ENCODE measurements at regions of chr3 and their contacts with region 1.

Region 1: DNA sequence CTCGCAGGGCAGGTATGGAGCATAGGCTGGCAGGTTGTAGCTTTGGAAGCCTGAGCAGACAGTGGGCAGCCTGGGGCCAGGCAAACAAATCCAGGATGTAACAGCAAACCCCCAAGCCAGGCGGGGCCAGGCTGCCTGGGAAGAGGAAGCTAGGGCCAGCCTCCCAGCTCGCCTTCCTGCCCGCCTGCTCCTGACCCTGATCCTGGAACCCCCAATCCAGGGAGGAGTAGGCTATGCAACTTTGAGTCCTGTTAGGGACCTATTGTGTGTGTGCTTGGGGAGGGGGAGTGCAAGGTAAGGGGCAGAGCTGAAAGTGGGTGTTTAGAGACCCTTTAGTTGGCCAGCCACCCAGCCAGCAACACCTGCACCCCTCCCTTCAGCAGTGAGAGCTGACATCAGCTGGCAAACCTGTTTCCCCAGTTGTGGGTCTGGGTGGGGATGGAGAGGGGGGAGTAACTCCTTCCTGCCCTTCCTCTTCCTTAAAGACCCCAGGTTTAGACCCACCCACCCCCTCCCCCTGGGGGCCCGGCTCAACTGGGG is 2.5 kb downstream of the NBEAL2 start:
- DNase-seq: peak; percentile 76
- ATAC-seq: no peak
- H3K4me3 ChIP-seq: peak overlapping the region; percentile 48
- H3K27ac ChIP-seq: peak overlapping the region; percentile 75
- H3K4me1 ChIP-seq: peaks cover 36% of the 10 kb centered on the region
- H3K27me3 ChIP-seq: no peaks in the 10 kb centered on the region
- CTCF ChIP-seq: no peak

Region 2: GRCh38 chr3:46935168-46935858 is 46.7 kb before region 1 on chr3:
- CTCF ChIA-PET with region 1: interaction called, 5 read pairs
- POLR2A ChIA-PET with region 1: interaction called, 33 read pairs
- intact Hi-C with region 1: loop called (anchors 2 kb)
- DNase-seq: peak; percentile 93
- ATAC-seq: peak; percentile 84
- H3K4me3 ChIP-seq: 0 out of 2 replicates have a peak overlapping the region, but pooled peaks have one; percentile 32
- H3K27ac ChIP-seq: peak overlapping the region; percentile 96
- H3K4me1 ChIP-seq: peaks cover 65% of the 10 kb centered on the region
- H3K27me3 ChIP-seq: no peaks in the 10 kb centered on the region
- CTCF ChIP-seq: peak; percentile 56